GM10248 (cell line): ENCODE measurements at regions of chr1 and their contacts with region 1.

Region 1: DNA sequence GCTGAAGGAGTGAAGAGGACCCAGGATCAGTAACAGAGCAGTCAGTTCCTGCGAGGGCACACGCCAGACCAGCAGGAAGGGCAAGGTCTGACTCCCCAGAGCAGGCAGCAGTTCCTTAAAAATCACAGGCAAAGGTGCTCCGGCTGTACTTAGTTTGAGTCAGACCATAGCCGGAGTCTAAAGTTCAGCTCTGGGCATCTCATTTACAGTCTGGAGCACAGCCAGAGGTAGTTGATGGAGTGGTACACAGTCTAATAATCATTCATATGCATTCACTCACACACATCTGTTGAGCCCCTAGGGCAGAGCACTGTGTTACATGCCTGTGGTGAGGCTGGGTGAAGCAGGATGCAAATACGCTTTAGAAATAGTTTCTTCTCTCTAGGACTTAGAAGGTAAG is 7.3 kb upstream of the AMIGO1 start:
- DNase-seq: no peak
- CTCF ChIP-seq: no peak

Region 2: DNA sequence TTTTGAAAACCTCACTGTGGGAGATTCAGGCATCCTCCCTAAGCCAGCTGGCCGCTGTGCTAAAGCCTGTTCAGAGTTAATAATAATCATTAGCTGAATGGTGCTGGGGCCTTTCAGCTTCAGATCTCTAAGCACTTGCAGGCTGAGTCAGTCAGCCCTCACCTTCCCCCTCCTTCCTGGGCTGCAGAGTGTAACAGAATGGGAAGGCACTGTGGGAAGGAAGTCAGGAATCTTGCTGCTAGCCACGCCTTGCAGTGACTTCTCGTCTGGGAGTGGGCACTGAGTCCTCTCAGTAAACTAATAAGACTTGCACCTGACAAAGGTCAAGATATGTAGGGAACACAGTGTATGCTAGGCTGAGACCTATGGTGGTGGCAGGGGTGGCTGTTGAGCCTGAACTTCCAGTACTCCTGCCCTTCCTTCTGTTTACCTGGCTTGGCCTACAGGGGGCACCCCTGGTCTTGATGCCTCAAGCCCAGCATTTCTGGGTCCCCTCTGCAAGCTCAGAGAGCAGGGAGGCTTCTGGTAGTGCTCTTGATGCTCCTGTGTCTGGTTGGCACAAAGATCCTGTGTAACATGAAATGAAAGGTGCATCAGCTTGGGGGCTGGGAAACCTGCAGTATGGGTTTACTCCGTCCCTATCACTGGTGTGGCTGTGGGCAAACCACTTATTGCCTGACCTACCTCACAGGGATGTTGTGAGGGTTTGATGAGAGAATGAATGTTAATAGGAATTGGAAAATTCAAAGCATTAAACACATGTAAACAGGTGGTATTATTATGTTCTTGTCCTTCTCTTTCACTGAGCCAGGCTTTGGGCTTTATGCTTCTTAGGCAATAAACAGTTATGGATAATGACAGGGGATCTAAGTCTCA is 17.0 kb before region 1 on chr1:
- CTCF ChIA-PET with region 1: interaction called, 1,898 read pairs
- POLR2A ChIA-PET with region 1: no interaction called
- DNase-seq: peak; percentile 28
- CTCF ChIP-seq: peak; percentile 56